Naive thymus-derived CD4-positive, alpha-beta T cell (primary cell): ENCODE measurements at regions of chr11 and their contacts with region 1.

Region 1: GRCh38 chr11:64553551-64554201 is 37.3 kb upstream of the SLC22A12 start:
- DNase-seq: peak; percentile 13 to 63 (median 37)
- ATAC-seq: peak; percentile 72
- H3K4me3 ChIP-seq: no peak overlapping the region
- H3K4me3 Mint-ChIP-seq: no peak overlapping the region
- H3K27ac ChIP-seq: no peak overlapping the region
- H3K27ac Mint-ChIP-seq: peak overlapping the region in 1 of 9 donors; percentile 64
- H3K4me1 ChIP-seq: no peaks in the 10 kb centered on the region
- H3K4me1 Mint-ChIP-seq: peaks cover 0 to 7% (median 0%) of the 10 kb centered on the region in 7 donors
- H3K27me3 ChIP-seq: no peaks in the 10 kb centered on the region
- H3K27me3 Mint-ChIP-seq: peaks cover 0 to 4% (median 0%) of the 10 kb centered on the region in 5 donors

Region 2: DNA sequence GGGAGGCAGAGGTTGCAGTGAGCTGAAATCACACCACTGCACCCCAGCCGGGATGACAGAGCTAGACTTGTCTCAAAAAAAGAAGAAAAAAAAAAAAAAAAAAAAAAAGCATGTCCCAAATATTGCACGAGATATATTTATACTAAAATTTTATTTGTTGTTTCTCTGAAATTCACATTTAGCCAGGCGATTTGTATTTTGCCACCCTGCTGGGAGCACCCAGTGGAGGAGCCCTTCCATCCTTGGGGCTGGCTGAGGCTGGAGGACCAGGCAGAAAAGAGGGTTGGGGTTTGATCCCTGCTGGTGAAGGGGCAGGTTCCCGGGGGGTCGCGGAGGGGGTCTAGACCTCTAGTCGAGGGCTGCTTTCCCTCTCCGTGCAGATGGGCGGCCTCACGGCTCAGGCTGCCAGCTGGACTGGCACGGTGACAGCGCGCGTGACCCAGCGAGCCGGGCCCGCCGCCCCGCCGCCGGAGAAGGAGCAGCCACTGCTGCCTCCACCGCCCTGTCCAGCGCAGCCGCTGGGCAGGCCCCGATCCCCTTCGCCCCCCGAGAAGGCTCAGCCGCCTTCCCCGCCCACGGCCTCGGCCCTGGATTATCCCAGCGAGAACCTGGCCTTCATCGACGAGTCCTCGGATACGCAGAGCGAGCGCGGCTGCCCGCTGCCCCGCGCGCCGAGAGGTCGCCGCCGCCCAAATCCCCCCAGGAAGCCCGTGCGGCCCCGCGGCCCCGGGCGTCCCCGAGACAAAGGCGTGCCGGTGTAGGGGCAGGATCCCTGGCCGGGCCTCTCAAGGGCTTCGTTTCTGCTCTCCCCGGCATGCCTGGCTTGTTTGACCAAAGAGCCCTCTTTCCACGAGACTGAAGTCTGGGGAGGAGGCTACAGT is 254.5 kb before region 1 on chr11:
- CTCF ChIA-PET with region 1: no interaction called
- POLR2A ChIA-PET with region 1: no interaction called
- intact Hi-C with region 1: no loop called
- DNase-seq: peak in 2 of 9 donors; percentile 14 to 31
- ATAC-seq: no peak
- H3K4me3 ChIP-seq: no peak overlapping the region
- H3K4me3 Mint-ChIP-seq: peak overlapping the region; percentile 59 to 85 (median 73)
- H3K27ac ChIP-seq: no peak overlapping the region
- H3K27ac Mint-ChIP-seq: peak overlapping the region in 1 of 9 donors; percentile 25
- H3K4me1 ChIP-seq: peaks cover 21 to 27% of the 10 kb centered on the region in 2 donors
- H3K4me1 Mint-ChIP-seq: peaks cover 20 to 37% (median 25%) of the 10 kb centered on the region in 7 donors
- H3K27me3 ChIP-seq: peaks cover 3 to 28% of the 10 kb centered on the region in 2 donors
- H3K27me3 Mint-ChIP-seq: peaks cover 52 to 81% (median 55%) of the 10 kb centered on the region in 5 donors

Region 3: GRCh38 chr11:64448599-64449556 is 104.8 kb before region 1 on chr11:
- CTCF ChIA-PET with region 1: no interaction called
- POLR2A ChIA-PET with region 1: no interaction called
- intact Hi-C with region 1: loop called in 1 of 2 experiments (anchors 1 kb)
- DNase-seq: peak; percentile 32 to 80 (median 58)
- ATAC-seq: peak; percentile 85
- H3K4me3 ChIP-seq: peak overlapping the region; percentile 68
- H3K4me3 Mint-ChIP-seq: peak overlapping the region; percentile 81 to 93 (median 86)
- H3K27ac ChIP-seq: no peak overlapping the region
- H3K27ac Mint-ChIP-seq: peak overlapping the region in 2 of 9 donors; percentile 75 to 76
- H3K4me1 ChIP-seq: peaks cover 15 to 17% of the 10 kb centered on the region in 2 donors
- H3K4me1 Mint-ChIP-seq: peaks cover 12 to 19% (median 17%) of the 10 kb centered on the region in 7 donors
- H3K27me3 ChIP-seq: peaks cover 0 to 6% of the 10 kb centered on the region in 2 donors
- H3K27me3 Mint-ChIP-seq: peaks cover 0 to 34% (median 15%) of the 10 kb centered on the region in 5 donors